Activated naive CD4-positive, alpha-beta T cell treated with anti-CD3 and anti-CD28 coated beads for 36 hours (primary cell): ENCODE measurements at regions of chr18 and their contacts with region 1.

Region 1: DNA sequence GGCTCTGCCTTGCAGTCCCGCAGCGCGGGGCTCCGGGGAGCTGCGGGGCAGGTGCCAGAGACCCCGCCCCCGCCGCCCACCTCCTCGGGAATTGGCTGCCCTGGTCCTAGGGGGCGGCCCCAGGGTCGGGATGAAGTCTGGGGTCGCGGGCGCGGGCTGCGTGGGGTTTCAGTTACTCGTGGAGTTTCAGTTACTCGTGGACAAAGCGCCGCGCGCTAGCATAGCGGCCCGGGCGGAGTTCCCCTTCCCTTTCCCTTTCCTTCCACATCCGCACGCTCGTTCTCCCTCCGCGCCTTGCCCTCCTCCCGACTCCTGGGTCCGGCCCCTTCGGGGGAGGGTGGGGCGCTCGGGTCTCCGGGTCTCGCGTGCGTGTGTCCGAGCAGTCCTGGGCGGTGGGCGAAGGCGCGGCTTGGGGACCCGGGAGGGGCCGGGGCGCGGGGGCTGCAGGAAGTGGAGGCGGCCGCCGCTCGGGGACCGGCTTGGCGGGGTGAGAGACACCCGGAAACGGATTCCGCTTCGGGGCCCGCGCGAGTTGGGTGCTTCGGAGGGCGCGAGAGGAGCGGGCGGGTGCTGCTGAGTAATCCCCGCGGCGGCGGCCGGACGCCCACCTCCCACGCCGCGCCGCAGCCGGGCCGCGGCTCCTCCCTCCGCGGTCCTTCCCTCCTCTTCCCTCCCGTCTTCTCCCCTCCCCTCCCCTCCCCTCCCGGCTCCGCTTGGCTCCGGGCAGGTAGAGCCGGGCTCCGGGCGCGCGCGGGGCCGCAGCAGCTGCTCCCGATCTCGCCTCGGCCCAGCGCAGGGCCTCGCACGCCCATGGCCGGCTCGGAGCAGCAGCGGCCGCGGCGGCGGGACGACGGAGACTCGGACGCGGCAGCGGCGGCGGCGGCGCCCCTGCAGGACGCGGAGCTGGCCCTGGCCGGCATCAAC is at the start of gene TTC39C:
- DNase-seq: peak; percentile 87
- H3K4me3 Mint-ChIP-seq: peak within 1 kb of the TSS; percentile 91
- H3K27ac Mint-ChIP-seq: peak within 1 kb of the TSS; percentile 89
- H3K4me1 Mint-ChIP-seq: peaks cover 69% of the 10 kb centered on the region
- H3K27me3 Mint-ChIP-seq: no peaks in the 10 kb centered on the region
- total RNA-seq, gene TTC39C: 39.9 to 44.2 TPM

Region 2: GRCh38 chr18:23828426-23828825 is 185.9 kb before region 1 on chr18:
- CTCF ChIA-PET with region 1: no interaction called
- intact Hi-C with region 1: loop called (anchors 5 kb)
- DNase-seq: peak; percentile 61
- H3K4me3 Mint-ChIP-seq: no peak overlapping the region
- H3K27ac Mint-ChIP-seq: no peak overlapping the region
- H3K4me1 Mint-ChIP-seq: peaks cover 37% of the 10 kb centered on the region
- H3K27me3 Mint-ChIP-seq: no peaks in the 10 kb centered on the region

Region 3: GRCh38 chr18:23964282-23965238 is 49.8 kb before region 1 on chr18:
- CTCF ChIA-PET with region 1: interaction called, 3 read pairs
- intact Hi-C with region 1: loop called (anchors 1 kb)
- DNase-seq: peak; percentile 75
- H3K4me3 Mint-ChIP-seq: peak overlapping the region; percentile 43
- H3K27ac Mint-ChIP-seq: peak overlapping the region; percentile 81
- H3K4me1 Mint-ChIP-seq: peaks cover 45% of the 10 kb centered on the region
- H3K27me3 Mint-ChIP-seq: no peaks in the 10 kb centered on the region

Region 4: DNA sequence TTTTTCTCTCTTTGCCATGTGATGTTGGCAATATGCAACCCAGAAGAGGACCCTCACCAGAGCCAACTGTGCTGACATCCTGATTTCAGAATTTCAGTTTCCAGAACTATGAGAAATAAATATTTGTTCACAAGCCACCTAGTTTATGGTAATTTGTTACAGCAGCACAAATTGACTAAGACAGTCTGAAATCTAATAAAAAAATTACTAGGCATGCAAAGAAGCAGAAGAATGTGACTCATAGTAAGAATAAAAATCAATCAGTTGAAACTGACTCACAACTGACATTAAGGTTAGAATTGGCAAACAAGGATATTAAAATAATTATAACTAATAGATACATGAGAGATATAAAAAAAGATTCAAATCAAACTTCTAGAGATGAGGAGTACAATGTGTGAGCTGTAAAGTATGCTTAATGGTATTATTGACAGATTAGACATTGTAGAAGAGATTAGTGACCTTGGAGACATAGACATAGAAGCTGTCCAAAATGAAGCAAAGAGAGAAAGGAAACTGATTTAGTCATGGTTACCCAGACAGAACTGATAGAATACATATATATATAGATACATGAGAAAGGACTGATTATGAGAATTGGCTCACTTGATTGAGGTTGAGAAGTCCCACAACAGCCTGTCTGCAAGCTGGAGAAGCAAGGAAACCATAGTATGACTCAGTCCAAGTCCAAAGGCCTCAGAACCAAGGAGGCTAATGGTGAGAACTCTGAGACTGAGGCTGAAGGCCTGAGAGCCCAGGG is 27.5 kb before region 1 on chr18:
- CTCF ChIA-PET with region 1: no interaction called
- intact Hi-C with region 1: loop called (anchors 1 kb)
- DNase-seq: peak; percentile 25
- H3K4me3 Mint-ChIP-seq: no peak overlapping the region
- H3K27ac Mint-ChIP-seq: peak overlapping the region; percentile 60
- H3K4me1 Mint-ChIP-seq: peaks cover 46% of the 10 kb centered on the region
- H3K27me3 Mint-ChIP-seq: no peaks in the 10 kb centered on the region

Region 5: GRCh38 chr18:23992089-23992940 is 22.0 kb before region 1 on chr18:
- CTCF ChIA-PET with region 1: no interaction called
- intact Hi-C with region 1: loop called (anchors 1 kb)
- DNase-seq: peak; percentile 58
- H3K4me3 Mint-ChIP-seq: no peak overlapping the region
- H3K27ac Mint-ChIP-seq: no peak overlapping the region
- H3K4me1 Mint-ChIP-seq: peaks cover 50% of the 10 kb centered on the region
- H3K27me3 Mint-ChIP-seq: no peaks in the 10 kb centered on the region